ENCODE measurements at regions of chr22 and their contacts with region 1.

Region 1: GRCh38 chr22:17742527-17742902 is 31.8 kb downstream of the BID start:
- DNase-seq: peak; percentile 74
- ATAC-seq: peak; percentile 65
- H3K4me3 Mint-ChIP-seq: no peak overlapping the region
- H3K27ac Mint-ChIP-seq: no peak overlapping the region
- H3K4me1 Mint-ChIP-seq: no peaks in the 10 kb centered on the region
- H3K27me3 Mint-ChIP-seq: no peaks in the 10 kb centered on the region

Region 2: GRCh38 chr22:17706018-17706900 is 36.3 kb before region 1 on chr22:
- CTCF ChIA-PET with region 1: no interaction called
- DNase-seq: peak; percentile 59
- ATAC-seq: peak; percentile 93
- H3K4me3 Mint-ChIP-seq: peak overlapping the region; percentile 32
- H3K27ac Mint-ChIP-seq: peak overlapping the region; percentile 80
- H3K4me1 Mint-ChIP-seq: peaks cover 16% of the 10 kb centered on the region
- H3K27me3 Mint-ChIP-seq: no peaks in the 10 kb centered on the region

Region 3: GRCh38 chr22:17764036-17764435 is 21.5 kb after region 1 on chr22:
- CTCF ChIA-PET with region 1: interaction called, 13 read pairs
- DNase-seq: no peak
- ATAC-seq: no peak
- H3K4me3 Mint-ChIP-seq: no peak overlapping the region
- H3K27ac Mint-ChIP-seq: no peak overlapping the region
- H3K4me1 Mint-ChIP-seq: peaks cover 17% of the 10 kb centered on the region
- H3K27me3 Mint-ChIP-seq: peaks cover 42% of the 10 kb centered on the region

Region 4: DNA sequence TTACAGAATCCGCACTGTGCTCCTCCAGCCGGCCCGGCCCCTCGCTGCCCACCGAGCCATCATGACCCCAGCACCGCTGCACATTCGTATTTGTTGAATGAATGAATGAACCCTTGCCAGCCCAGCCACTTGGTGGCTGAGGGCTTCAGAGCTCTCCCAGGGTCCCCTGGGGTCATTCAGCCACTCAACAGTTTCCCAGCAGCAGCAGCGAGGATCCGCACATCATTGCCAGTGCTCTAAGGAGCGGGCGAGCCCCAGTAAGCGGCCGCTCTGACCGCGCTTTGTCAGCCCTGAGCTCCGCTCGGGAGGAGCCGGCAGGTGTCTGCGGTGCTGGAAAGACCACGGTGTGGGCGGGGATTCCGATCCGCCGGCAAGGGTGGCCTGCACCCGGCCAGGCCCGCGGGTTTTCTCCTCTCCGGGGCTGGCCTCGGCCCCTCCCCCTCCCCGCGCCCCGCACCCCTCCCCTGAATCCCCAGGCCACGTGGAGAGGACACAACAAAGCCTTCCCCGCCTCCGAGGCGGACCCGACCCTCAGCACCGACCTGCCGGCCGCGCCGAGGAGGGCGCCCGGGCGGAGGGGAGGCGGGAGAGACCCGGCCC is 31.2 kb after region 1 on chr22:
- CTCF ChIA-PET with region 1: interaction called, 28 read pairs
- DNase-seq: peak; percentile 81
- ATAC-seq: peak; percentile 60
- H3K4me3 Mint-ChIP-seq: peak overlapping the region; percentile 71
- H3K27ac Mint-ChIP-seq: no peak overlapping the region
- H3K4me1 Mint-ChIP-seq: peaks cover 45% of the 10 kb centered on the region
- H3K27me3 Mint-ChIP-seq: peaks cover 49% of the 10 kb centered on the region

Region 5: GRCh38 chr22:17779286-17780115 is 37.0 kb after region 1 on chr22:
- CTCF ChIA-PET with region 1: interaction called, 109 read pairs
- DNase-seq: peak; percentile 70
- ATAC-seq: peak; percentile 50
- H3K4me3 Mint-ChIP-seq: peak overlapping the region; percentile 45
- H3K27ac Mint-ChIP-seq: peak overlapping the region; percentile 70
- H3K4me1 Mint-ChIP-seq: peaks cover 57% of the 10 kb centered on the region
- H3K27me3 Mint-ChIP-seq: peaks cover 16% of the 10 kb centered on the region

Region 6: DNA sequence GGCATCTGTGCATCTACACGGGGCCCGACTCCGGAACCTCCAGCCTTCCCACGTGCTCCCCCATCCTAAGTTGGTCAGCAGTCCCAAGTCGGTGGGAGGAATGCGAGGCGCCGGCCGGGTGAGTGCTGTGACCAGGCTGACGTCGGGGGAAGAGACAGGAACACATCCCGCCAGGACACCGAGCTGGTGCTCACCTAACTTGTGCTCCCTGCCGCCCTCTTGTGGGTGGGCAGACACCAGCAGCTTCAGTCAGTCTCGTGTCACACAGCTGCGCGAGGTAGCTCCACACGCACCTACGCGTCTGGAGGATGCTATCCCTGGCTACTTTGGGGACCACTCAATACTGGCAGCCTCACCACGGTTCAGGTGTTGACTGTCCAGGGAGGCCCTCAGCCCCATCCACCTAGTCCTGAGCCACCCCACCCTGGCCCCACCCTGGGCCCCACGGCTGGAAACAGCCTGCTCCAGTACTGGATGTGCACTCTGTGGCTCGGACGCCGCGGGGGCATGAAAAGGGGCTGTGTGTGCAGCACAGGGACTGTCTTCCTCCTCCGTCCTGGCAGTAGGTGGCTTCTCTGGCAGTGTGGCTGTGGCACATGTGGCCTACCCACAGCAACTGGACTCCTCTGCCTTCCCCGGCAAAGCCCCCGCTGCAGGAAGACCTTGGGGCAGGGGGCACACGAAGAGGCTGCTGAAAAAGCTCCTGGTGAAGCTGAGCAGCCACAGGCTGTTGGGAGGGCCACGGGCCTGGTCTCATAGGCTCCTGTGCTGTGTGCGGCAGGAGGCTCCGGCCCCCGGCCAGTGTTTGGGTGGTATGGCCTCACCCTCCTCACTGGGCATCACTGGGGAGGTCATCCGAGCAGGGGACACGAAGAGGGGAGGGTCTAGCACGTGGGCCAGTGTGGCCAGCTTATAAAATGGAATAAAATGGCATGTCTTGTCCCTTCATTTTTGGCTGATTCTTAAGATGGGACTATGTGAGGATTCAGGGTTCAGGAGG is 43.0 kb after region 1 on chr22:
- CTCF ChIA-PET with region 1: interaction called, 109 read pairs
- DNase-seq: peak; percentile 77
- ATAC-seq: peak; percentile 70
- H3K4me3 Mint-ChIP-seq: no peak overlapping the region
- H3K27ac Mint-ChIP-seq: no peak overlapping the region
- H3K4me1 Mint-ChIP-seq: peaks cover 15% of the 10 kb centered on the region
- H3K27me3 Mint-ChIP-seq: no peaks in the 10 kb centered on the region

Region 7: GRCh38 chr22:17836992-17837742 is 94.7 kb after region 1 on chr22:
- CTCF ChIA-PET with region 1: no interaction called
- DNase-seq: no peak
- ATAC-seq: no peak
- H3K4me3 Mint-ChIP-seq: no peak overlapping the region
- H3K27ac Mint-ChIP-seq: no peak overlapping the region
- H3K4me1 Mint-ChIP-seq: peaks cover 5% of the 10 kb centered on the region
- H3K27me3 Mint-ChIP-seq: no peaks in the 10 kb centered on the region